Activated B cell treated with CpG ODN at 0.5 μM for 24 hours (primary cell): ENCODE measurements at regions of chr11 and their contacts with region 1.

Region 1: GRCh38 chr11:10455637-10456487 is 798 bp downstream of the AMPD3 start:
- DNase-seq: peak; percentile 69
- ATAC-seq: peak; percentile 70
- H3K4me3 Mint-ChIP-seq: peak overlapping the region; percentile 87
- H3K27ac Mint-ChIP-seq: peak overlapping the region; percentile 96
- H3K4me1 Mint-ChIP-seq: peaks cover 95% of the 10 kb centered on the region
- H3K27me3 Mint-ChIP-seq: no peaks in the 10 kb centered on the region
- CTCF ChIP-seq: no peak

Region 2: GRCh38 chr11:9663699-9664275 is 792.1 kb before region 1 on chr11 and contains the start of gene SWAP70:
- CTCF ChIA-PET with region 1: no interaction called
- POLR2A ChIA-PET with region 1: no interaction called
- intact Hi-C with region 1: loop called (anchors 10 kb)
- DNase-seq: peak; percentile 97
- ATAC-seq: peak; percentile 83
- H3K4me3 Mint-ChIP-seq: peak within 1 kb of the TSS; percentile 96
- H3K27ac Mint-ChIP-seq: peak within 1 kb of the TSS; percentile 97
- H3K4me1 Mint-ChIP-seq: peaks cover 73% of the 10 kb centered on the region
- H3K27me3 Mint-ChIP-seq: no peaks in the 10 kb centered on the region
- CTCF ChIP-seq: no peak
- total RNA-seq, gene SWAP70: 277 and 288 TPM in 2 replicates

Region 3: DNA sequence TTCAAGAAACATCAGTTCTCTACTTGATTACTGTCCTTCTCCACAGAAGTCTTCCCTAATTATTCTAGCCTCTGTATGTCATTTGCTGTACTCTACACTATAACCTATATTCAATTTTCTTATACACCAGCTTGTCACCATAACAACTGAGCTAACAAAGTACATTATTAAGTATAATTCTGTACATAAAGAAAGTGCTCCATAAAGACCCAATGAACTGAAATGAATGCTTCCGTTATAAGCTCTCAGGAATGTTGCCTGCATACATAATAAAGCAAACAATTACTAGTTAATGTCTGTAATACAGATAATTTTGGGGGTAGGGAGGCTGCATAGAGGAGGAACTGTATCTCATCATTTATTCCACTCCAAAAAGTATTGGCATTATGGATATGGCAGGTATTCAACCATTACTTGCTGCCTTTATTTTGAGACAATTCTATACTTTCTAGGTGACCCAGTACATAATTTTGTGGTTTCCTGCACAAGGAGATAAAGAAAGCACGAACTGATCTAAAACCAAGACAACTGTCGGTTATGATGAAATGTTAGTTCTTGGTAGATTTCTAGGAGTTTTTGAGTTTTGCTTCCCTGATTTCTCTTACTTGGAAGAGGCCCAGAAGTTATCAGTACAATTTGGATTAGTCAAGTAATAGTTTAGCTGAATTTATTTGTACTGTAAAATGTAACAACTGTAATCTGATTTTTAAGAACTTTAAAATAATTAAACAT is 364.4 kb before region 1 on chr11:
- CTCF ChIA-PET with region 1: no interaction called
- POLR2A ChIA-PET with region 1: no interaction called
- intact Hi-C with region 1: no loop called
- DNase-seq: no peak
- ATAC-seq: no peak
- H3K4me3 Mint-ChIP-seq: no peak overlapping the region
- H3K27ac Mint-ChIP-seq: no peak overlapping the region
- H3K4me1 Mint-ChIP-seq: no peaks in the 10 kb centered on the region
- H3K27me3 Mint-ChIP-seq: no peaks in the 10 kb centered on the region
- CTCF ChIP-seq: no peak

Region 4: GRCh38 chr11:10413268-10413667 is 42.6 kb before region 1 on chr11:
- CTCF ChIA-PET with region 1: interaction called, 32 read pairs
- POLR2A ChIA-PET with region 1: interaction called, 18 read pairs
- intact Hi-C with region 1: loop called (anchors 1 kb)
- DNase-seq: no peak
- ATAC-seq: peak; percentile 96
- H3K4me3 Mint-ChIP-seq: no peak overlapping the region
- H3K27ac Mint-ChIP-seq: no peak overlapping the region
- H3K4me1 Mint-ChIP-seq: peaks cover 22% of the 10 kb centered on the region
- H3K27me3 Mint-ChIP-seq: no peaks in the 10 kb centered on the region
- CTCF ChIP-seq: no peak

Region 5: DNA sequence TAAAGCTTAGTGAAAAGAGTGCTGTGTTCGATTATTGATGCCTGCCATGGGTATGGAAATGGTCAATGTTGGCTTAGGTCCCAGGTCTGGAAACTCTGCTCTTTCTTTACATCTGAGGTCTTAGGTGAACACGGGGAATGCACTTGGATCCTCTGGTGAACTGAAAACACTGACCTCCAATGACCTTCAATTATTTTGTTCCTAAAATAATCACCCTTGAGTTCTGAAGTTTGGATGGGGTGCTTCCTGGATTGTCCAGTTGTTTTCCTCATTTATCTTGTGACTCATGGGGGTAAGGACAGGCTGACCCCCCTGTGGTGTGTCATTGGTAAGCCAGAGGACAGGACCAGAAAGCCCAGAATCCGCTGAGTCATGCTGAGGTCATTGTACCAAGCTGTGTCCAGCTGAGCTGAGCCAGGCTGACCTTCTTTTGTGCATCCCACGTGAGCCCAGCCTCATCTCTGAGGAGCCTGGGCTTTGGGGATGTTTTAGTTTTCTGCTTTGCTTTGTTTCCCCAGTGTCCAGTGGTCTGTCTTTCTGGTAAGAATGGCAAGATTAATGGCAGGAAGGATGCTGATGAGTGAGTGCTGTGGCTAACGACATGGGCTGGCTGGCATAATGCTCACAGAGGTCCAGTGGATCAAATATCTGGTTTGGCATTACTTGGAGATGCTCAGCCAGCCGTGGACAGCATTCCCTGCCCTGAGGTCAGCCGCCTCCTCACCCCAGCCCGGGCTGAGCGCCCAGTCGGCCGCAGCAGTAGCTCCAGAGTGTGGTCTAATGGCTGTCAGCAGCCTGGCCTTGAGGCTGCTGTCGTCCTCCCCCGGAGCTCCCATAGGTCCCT is 34.8 kb after region 1 on chr11:
- CTCF ChIA-PET with region 1: interaction called, 16 read pairs
- POLR2A ChIA-PET with region 1: interaction called, 219 read pairs
- intact Hi-C with region 1: loop called (anchors 1 kb)
- DNase-seq: no peak
- ATAC-seq: no peak
- H3K4me3 Mint-ChIP-seq: no peak overlapping the region
- H3K27ac Mint-ChIP-seq: peak overlapping the region; percentile 91
- H3K4me1 Mint-ChIP-seq: peaks cover 43% of the 10 kb centered on the region
- H3K27me3 Mint-ChIP-seq: no peaks in the 10 kb centered on the region
- CTCF ChIP-seq: no peak

Region 6: DNA sequence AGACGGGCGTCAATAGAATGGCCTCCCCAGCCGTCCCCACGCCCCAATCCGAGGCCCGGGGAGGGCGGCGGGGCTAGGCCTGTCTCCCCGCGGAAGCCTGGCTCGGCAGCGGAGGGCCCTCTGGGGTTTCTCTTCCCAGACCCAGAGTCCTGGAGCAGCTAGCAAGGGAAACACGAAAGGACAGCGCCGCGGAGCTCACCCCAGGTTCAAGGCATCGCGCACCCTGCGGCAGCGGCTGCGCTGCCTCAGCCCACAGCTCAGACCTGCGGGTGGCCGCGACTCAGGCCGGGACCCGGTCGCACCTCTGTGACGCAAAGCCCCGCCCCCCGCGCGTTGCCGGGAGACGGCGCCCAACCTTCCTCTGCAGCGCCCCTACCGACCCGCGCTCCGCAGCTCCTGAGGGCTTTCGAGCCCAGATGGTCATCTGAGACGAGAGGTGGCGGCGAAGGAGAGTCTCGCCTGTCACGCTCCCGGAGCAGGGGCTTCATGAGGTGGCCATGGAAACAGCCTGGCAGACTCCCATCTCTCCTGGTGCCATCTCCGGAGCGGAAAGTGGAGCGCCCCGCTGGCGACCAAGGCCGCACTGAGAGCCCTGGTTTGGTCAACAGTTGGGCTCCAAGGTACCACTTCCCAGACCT is 85.2 kb after region 1 on chr11 and contains the start of gene RNF141:
- CTCF ChIA-PET with region 1: interaction called, 7 read pairs
- POLR2A ChIA-PET with region 1: interaction called, 37 read pairs
- intact Hi-C with region 1: loop called (anchors 1 kb)
- DNase-seq: peak; percentile 99
- ATAC-seq: peak; percentile 91
- H3K4me3 Mint-ChIP-seq: peak within 1 kb of the TSS; percentile 90
- H3K27ac Mint-ChIP-seq: peak within 1 kb of the TSS; percentile 95
- H3K4me1 Mint-ChIP-seq: peaks cover 80% of the 10 kb centered on the region
- H3K27me3 Mint-ChIP-seq: no peaks in the 10 kb centered on the region
- CTCF ChIP-seq: no peak
- total RNA-seq, gene RNF141: 32.8 and 36.9 TPM in 2 replicates

Region 7: DNA sequence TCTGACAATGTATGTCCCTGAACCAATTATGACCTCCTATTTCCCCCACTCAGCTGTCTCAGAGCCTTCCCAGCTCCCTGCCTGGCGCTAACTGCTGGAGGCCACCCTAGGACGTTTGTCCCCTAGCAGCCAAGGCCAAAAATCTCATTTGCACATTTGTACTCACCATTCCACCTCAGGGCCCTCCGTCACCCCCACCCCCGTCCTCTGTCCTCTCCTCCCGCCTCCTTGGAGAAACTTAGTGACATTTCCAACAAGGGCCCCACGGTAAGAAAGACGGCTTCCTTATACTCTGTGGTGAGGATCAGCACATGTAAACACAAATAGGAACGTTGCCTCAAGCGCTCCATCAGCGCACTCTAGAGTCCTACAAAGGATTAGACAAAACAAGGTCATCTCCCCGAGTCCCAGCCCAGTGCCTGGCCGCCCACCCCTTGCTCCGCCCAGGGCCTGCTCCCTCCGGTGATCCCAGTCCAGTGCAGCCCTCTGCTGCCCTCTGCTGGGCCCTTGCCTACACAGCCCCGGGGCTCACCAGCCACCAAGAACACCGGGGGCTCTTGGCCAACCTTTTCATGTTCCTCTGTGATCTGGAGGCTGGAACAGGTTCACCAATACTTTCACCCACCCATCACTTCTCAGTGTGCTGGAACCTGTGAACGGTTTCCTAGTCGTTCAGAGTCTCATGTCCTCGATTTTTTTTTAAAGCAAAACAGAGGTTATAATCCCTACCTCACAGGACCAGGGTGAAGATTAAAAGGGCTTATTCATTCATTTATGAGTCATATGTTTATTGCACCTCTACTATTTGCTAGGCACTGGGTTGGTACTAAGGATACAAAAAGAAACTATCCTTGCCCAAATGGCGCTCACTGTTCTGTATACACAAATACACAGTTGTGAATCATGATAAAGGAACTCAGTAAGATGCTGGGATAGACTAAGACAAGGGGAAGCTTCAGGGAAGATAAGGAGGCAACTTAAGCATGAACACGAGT is 279.9 kb after region 1 on chr11:
- CTCF ChIA-PET with region 1: no interaction called
- POLR2A ChIA-PET with region 1: no interaction called
- intact Hi-C with region 1: loop called (anchors 5 kb)
- DNase-seq: peak; percentile 93
- ATAC-seq: peak; percentile 100
- H3K4me3 Mint-ChIP-seq: peak overlapping the region; percentile 77
- H3K27ac Mint-ChIP-seq: peak overlapping the region; percentile 83
- H3K4me1 Mint-ChIP-seq: peaks cover 13% of the 10 kb centered on the region
- H3K27me3 Mint-ChIP-seq: no peaks in the 10 kb centered on the region
- CTCF ChIP-seq: peak; percentile 65